ENCODE measurements at regions of chr18 and their contacts with region 1.

Region 1: DNA sequence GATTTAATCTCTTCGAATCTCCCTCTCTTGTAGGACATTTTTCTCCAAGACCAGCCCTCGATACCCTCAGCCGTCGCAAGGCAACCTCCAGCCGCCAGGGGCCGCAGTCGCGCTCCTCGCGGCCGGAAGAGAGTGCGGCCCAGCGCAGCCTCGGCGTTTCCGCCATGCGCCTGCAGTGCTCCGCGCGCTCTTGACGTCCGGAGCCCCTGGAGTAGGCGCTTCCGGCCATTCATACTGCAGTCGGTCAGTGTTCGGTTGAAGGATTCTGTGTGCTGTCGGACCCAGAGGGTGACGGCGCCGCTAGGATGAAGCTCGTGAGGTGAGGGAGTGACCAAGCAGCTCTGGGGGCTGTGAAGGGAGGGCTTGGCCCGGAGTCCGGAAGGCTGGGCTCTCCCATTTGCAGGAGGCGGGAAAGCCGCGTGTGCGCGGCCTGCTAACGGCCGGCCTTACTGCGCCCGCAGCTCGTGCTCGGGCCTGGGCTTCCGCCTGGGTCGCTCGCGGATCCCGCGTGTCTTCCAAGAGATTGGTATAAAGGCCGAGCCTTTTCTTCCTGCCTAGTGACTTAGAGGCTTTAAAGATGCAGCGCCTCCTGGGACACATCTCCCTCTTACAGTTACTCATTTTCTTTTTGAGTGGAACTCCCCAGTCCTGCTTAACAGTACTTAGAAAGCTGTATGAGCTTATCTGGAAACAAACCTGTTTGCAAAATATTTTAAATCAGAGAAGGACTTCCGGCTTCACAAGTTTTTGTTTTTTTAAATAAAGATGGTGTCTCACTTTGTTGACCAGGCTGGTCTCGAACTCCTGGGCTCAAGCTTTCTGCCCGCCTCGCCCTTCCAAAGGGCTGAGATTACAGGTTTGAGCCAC is at the start of gene SNRPD1:
- DNase-seq: peak; percentile 86 to 88
- H3K4me3 ChIP-seq: peak within 1 kb of the TSS; percentile 20 to 62 (median 54)
- H3K27ac ChIP-seq: peak within 1 kb of the TSS in 2 of 3 donors; percentile 60 to 73
- H3K4me1 ChIP-seq: peaks cover 8 to 12% of the 10 kb centered on the region in 2 donors
- H3K27me3 ChIP-seq: no peaks in the 10 kb centered on the region
- CTCF ChIP-seq: peak; percentile 84 to 98 (median 94)
- POLR2A ChIP-seq: peak in 1 of 2 donors; percentile 51
- total RNA-seq, gene SNRPD1: 4.1 to 8.5 (median 6.7) TPM

Region 2: DNA sequence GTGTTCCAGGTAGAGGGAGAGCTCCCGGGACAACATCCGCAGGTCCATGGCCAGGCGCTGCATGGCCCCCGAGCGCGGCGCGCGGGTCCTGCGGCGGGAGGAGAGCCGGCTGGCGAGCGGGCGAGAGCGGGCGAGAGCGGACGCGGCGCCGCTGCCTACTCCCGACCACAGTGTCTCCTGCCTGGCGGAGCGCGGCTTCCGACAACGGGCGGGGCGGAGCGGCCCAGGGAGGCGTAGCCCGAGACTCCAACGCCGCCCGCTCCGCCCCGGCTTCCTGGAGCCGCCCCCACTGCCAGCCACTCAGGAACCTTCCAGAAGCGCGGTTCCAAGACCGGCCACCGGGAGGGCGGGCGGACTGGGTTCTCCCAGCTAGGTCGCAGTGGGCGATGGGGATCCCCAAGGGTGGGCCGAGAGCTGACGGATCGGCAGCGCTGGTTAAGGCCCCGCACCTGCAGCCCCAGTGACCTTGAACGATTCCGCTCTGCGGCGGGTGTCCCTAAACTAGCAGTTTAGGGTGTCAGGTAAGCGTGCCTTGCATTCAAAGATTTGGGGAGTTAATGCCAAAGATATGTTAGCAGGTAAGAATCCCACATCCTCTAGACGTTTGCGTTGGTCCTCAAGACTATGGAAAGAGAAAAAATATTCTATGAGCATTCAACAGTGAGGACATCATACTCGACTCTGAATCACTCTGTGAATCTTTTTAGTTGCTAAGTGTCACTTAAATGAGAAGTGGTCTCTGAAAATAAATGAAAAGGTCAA is 92.4 kb after region 1 on chr18 and contains the start of gene ABHD3:
- intact Hi-C with region 1: loop called (anchors 5 kb)
- DNase-seq: peak; percentile 96
- H3K4me3 ChIP-seq: peak within 1 kb of the TSS; percentile 48 to 83 (median 63)
- H3K27ac ChIP-seq: peak within 1 kb of the TSS; percentile 90 to 96 (median 94)
- H3K4me1 ChIP-seq: peaks cover 0 to 3% of the 10 kb centered on the region in 2 donors
- H3K27me3 ChIP-seq: no peaks in the 10 kb centered on the region
- CTCF ChIP-seq: peak in 5 of 6 experiments; percentile 14 to 85 (median 69)
- POLR2A ChIP-seq: peak; percentile 88 to 100
- total RNA-seq, gene ABHD3: 17.6 to 28.2 (median 24.5) TPM